Breast epithelium (tissue), 4 donors: ENCODE measurements at regions of chr2 and their contacts with region 1.

Region 1: DNA sequence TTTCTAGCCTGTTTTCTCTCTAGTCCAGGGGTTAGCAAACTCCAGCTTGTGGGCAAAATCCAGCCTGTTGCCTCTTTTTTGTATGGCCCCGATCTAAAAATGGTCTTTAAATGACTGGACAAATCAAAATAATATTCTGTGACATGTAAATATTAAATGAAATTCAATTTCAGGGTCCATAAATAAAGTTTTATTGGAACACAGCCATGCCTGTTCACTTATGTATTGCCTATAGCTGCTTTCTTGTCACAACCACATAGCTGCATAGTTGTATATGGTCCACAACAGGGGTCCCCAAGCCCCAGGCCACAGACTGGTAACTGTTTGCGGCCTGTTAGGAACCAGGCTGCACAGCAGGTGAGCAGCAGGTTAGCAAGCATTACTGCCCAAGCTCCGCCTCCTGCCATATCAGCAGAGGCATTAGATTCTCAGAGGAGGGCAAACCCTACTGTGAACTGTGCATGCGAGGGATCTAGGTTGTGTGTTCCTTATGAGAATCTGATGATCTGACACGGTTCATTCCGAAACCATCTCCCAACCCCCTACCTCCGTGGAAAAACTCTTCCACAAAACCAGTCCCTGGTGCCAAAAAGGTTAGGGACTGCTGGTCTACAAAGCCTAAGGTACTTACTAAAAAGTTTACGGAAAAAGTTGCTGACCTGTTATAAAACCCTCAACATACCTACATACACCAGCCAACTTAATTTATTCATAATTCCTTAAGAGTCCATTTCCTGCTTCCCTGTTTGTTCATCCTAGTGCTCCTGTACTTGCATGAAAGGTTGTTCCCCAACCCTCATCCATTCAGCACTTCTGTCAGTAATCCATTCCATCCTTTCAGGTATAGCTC is 40.0 kb downstream of the NDUFAF7 start:
- DNase-seq: no peak
- H3K4me3 ChIP-seq: no peak overlapping the region
- H3K27ac ChIP-seq: no peak overlapping the region
- H3K4me1 ChIP-seq: no peaks in the 10 kb centered on the region
- H3K27me3 ChIP-seq: no peaks in the 10 kb centered on the region
- CTCF ChIP-seq: no peak
- POLR2A ChIP-seq: no peak

Region 2: GRCh38 chr2:37215250-37215649 is 56.2 kb before region 1 on chr2:
- intact Hi-C with region 1: no loop called
- DNase-seq: no peak
- H3K4me3 ChIP-seq: no peak overlapping the region
- H3K27ac ChIP-seq: no peak overlapping the region
- H3K4me1 ChIP-seq: no peaks in the 10 kb centered on the region
- H3K27me3 ChIP-seq: no peaks in the 10 kb centered on the region
- CTCF ChIP-seq: no peak
- POLR2A ChIP-seq: no peak

Region 3: GRCh38 chr2:37250869-37251740 is 20.3 kb before region 1 on chr2:
- intact Hi-C with region 1: loop called (anchors 1 kb)
- DNase-seq: no peak
- H3K4me3 ChIP-seq: no peak overlapping the region
- H3K27ac ChIP-seq: no peak overlapping the region
- H3K4me1 ChIP-seq: no peaks in the 10 kb centered on the region
- H3K27me3 ChIP-seq: no peaks in the 10 kb centered on the region
- CTCF ChIP-seq: no peak
- POLR2A ChIP-seq: no peak

Region 4: DNA sequence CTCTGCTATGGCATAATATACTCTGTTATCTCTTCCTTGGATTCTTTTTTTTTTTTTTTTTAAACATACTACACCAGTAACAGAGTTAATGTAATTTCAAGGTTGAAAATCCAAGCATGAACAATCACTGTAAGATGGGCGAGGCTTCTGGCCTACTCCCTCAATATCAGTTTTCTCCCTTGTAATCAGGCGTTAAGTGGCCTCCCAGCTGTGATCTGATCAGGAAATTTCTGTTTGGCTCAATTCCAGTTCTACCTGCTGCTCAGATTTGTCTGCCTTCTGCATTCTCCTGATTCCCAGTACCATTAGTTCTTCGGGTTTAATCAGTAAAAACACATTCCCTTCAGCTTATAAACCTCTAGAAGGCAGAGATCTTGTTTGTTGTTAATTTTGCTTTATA is 34.6 kb after region 1 on chr2:
- intact Hi-C with region 1: no loop called
- DNase-seq: no peak
- H3K4me3 ChIP-seq: no peak overlapping the region
- H3K27ac ChIP-seq: no peak overlapping the region
- H3K4me1 ChIP-seq: no peaks in the 10 kb centered on the region
- H3K27me3 ChIP-seq: no peaks in the 10 kb centered on the region
- CTCF ChIP-seq: no peak
- POLR2A ChIP-seq: no peak

Region 5: DNA sequence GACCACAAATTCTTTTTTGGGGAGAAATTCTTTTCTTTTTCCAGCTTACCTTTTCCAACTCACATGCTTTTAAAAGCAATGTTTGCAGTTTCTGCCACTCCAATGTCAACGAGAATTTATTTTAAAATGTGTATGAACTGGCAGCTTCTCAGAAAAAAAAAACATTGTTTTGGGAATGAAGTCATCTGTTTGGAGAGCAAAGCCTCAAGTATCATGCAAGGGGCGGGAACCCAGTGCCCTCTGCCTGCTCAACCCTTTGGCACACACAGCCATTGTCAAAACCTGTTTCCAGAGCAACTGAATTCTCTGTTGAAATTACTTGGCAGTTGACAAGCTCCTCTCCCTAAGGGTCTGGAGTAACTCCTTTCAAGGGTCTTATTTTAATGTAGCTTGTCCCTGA is 201.5 kb after region 1 on chr2:
- intact Hi-C with region 1: no loop called
- DNase-seq: peak in 1 of 2 donors; percentile 29
- H3K4me3 ChIP-seq: no peak overlapping the region
- H3K27ac ChIP-seq: peak overlapping the region in 1 of 2 donors; percentile 26
- H3K4me1 ChIP-seq: no peaks in the 10 kb centered on the region
- H3K27me3 ChIP-seq: no peaks in the 10 kb centered on the region
- CTCF ChIP-seq: no peak
- POLR2A ChIP-seq: no peak

Region 6: GRCh38 chr2:38654528-38655381 is 1383.3 kb after region 1 on chr2:
- intact Hi-C with region 1: loop called (anchors 5 kb)
- DNase-seq: no peak
- H3K4me3 ChIP-seq: no peak overlapping the region
- H3K27ac ChIP-seq: no peak overlapping the region
- H3K4me1 ChIP-seq: no peaks in the 10 kb centered on the region
- H3K27me3 ChIP-seq: no peaks in the 10 kb centered on the region
- CTCF ChIP-seq: no peak
- POLR2A ChIP-seq: no peak